ENCODE measurements at regions of chr13 and their contacts with region 1.

Region 1: GRCh38 chr13:37602747-37603381 is 4.3 kb upstream of the POSTN start:
- DNase-seq: no peak
- ATAC-seq: peak in 3 of 8 donors; percentile 25 to 55 (median 46)
- H3K4me3 ChIP-seq: no peak overlapping the region
- H3K27ac ChIP-seq: no peak overlapping the region
- H3K4me1 ChIP-seq: peaks cover 0 to 8% (median 0%) of the 10 kb centered on the region in 9 donors
- H3K27me3 ChIP-seq: no peaks in the 10 kb centered on the region
- CTCF ChIP-seq: peak; percentile 40 to 81 (median 68)

Region 2: DNA sequence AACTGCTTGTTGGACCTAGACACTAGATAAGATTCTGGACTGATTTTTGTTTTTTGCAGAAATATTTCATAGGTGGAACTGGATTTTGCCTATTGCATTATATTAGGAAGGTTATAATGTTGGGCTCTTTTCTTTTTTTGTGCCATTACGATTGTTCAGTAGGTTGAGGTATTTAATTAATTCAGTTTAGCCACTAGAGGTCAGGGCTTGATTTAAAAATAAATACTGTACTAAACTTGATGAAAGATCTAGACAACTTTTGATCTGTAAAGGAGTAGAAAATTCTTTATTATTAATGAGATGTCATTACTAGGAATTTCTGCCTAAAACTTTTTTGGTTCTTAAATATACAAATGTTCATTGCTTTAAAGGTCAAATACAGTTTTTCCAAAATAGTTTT is 528.2 kb before region 1 on chr13:
- intact Hi-C with region 1: loop called in 6 of 10 experiments (anchors 2 to 10 kb)
- DNase-seq: no peak
- ATAC-seq: peak in 2 of 8 donors; percentile 46 to 62
- H3K4me3 ChIP-seq: no peak overlapping the region
- H3K27ac ChIP-seq: no peak overlapping the region
- H3K4me1 ChIP-seq: no peaks in the 10 kb centered on the region
- H3K27me3 ChIP-seq: no peaks in the 10 kb centered on the region
- CTCF ChIP-seq: peak; percentile 15 to 61 (median 47)

Region 3: DNA sequence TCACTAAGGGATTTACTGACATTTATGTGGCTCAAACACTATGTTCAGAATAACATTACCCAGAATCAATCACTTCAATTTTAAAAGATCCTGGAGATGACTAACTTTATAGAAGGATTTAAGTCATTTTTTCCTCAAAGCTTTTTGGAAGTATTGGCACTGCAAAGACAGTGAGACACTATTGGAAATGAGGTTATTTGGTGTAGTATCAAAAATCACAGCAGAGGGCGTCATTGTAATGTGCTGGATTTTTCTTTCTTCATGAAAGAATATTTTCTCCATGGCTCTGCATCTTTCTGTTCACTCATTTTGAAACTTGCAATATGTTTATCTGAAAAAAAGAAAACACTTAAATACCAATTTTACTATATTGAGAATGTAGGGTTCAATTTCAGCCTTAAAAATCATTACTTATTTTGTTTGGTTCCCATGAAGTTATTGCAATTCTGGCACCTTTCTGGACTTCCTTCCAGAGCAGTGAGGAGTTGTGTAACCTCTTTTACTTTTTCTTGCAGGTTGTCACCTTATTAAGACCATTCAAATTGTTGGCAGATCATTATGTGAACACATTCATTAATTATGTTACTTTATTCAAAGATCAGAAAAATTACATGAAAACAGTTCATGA is 493.7 kb before region 1 on chr13:
- intact Hi-C with region 1: loop called (anchors 1 to 5 kb)
- DNase-seq: peak in 1 of 2 donors; percentile 23
- ATAC-seq: peak in 7 of 8 donors; percentile 42 to 68 (median 59)
- H3K4me3 ChIP-seq: no peak overlapping the region
- H3K27ac ChIP-seq: no peak overlapping the region
- H3K4me1 ChIP-seq: peaks cover 0 to 10% (median 0%) of the 10 kb centered on the region in 9 donors
- H3K27me3 ChIP-seq: no peaks in the 10 kb centered on the region
- CTCF ChIP-seq: peak; percentile 52 to 84 (median 72)

Region 4: DNA sequence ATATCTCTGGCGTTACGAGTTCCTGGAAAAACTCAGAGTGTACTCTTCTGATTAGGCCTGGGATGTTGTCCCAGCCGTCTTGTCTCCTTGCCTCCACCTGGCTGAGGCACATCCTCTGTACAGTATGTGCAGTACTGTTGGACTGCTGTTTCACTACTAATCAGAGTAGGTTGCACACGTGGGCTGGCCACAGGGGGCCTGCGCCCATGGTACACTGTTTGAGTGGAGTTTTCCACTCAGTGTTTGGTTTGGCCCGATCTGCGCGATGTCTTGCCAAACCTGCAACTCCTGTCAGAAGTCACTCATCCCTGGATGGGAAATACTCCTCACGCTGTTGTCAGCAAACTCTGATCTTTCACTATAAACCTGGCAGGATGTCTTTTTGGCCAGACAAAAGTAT is 307.8 kb before region 1 on chr13:
- intact Hi-C with region 1: loop called in 1 of 10 experiments (anchors 10 kb)
- DNase-seq: peak; percentile 33 to 36
- ATAC-seq: peak; percentile 61 to 99 (median 86)
- H3K4me3 ChIP-seq: no peak overlapping the region
- H3K27ac ChIP-seq: peak overlapping the region in 3 of 10 donors; percentile 31 to 63 (median 47)
- H3K4me1 ChIP-seq: peaks cover 0 to 17% (median 0%) of the 10 kb centered on the region in 9 donors
- H3K27me3 ChIP-seq: no peaks in the 10 kb centered on the region
- CTCF ChIP-seq: no peak

Region 5: DNA sequence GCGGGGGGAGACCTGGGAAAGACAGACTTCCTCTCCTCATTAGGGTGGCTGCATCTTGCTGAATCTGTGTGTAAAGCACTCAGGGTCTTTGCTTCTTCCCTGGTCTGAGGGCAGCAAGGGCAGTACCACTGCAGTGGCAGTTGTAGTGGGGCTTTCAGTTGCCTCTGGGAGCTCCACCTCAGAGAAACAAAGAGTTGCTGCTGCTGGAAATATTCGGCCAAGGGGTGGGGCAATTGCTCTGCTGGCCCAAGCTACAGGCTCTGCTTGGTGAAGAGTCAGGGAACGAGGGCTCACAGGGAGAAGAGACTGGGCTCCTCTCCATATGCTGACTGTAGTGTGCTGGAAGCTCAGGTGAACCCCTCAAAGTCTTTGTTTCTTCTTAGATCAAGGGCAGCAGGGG is 56.8 kb before region 1 on chr13:
- intact Hi-C with region 1: no loop called
- DNase-seq: no peak
- ATAC-seq: no peak
- H3K4me3 ChIP-seq: no peak overlapping the region
- H3K27ac ChIP-seq: no peak overlapping the region
- H3K4me1 ChIP-seq: no peaks in the 10 kb centered on the region
- H3K27me3 ChIP-seq: no peaks in the 10 kb centered on the region
- CTCF ChIP-seq: no peak

Region 6: DNA sequence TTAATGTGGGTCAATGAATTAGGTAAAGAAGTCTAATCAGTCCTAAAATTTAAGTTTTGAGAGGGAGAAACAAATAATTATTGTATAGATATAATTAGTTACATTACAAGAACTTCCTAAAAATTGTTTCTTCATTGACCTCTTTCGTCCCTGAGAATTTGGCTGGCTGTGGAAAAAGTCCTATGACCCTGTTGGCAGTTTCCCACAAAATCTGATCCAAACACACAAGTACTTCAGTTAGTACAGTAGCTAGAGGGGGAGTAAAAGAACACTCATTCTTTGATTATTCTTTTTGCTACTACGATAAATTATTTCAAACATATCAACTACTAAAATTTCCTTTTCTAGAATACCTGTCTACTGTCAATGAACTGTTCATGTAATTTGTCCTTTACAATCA is 15.6 kb before region 1 on chr13:
- intact Hi-C with region 1: no loop called
- DNase-seq: peak in 1 of 2 donors; percentile 15
- ATAC-seq: peak in 2 of 8 donors; percentile 47 to 49
- H3K4me3 ChIP-seq: no peak overlapping the region
- H3K27ac ChIP-seq: no peak overlapping the region
- H3K4me1 ChIP-seq: peaks cover 0 to 13% (median 0%) of the 10 kb centered on the region in 9 donors
- H3K27me3 ChIP-seq: no peaks in the 10 kb centered on the region
- CTCF ChIP-seq: no peak

Region 7: GRCh38 chr13:37837098-37837497 is 234.2 kb after region 1 on chr13:
- intact Hi-C with region 1: no loop called
- DNase-seq: no peak
- ATAC-seq: no peak
- H3K4me3 ChIP-seq: no peak overlapping the region
- H3K27ac ChIP-seq: no peak overlapping the region
- H3K4me1 ChIP-seq: no peaks in the 10 kb centered on the region
- H3K27me3 ChIP-seq: no peaks in the 10 kb centered on the region
- CTCF ChIP-seq: no peak

Region 8: GRCh38 chr13:38888309-38888708 is 1285.4 kb after region 1 on chr13:
- intact Hi-C with region 1: loop called in 1 of 10 experiments (anchors 10 kb)
- DNase-seq: no peak
- ATAC-seq: no peak
- H3K4me3 ChIP-seq: no peak overlapping the region
- H3K27ac ChIP-seq: no peak overlapping the region
- H3K4me1 ChIP-seq: no peaks in the 10 kb centered on the region
- H3K27me3 ChIP-seq: peaks cover 0 to 8% (median 0%) of the 10 kb centered on the region in 7 donors
- CTCF ChIP-seq: no peak

Measured in heart right ventricle (tissue), 16 donors.